ENCODE measurements at regions of chr17 and their contacts with region 1.

Region 1: DNA sequence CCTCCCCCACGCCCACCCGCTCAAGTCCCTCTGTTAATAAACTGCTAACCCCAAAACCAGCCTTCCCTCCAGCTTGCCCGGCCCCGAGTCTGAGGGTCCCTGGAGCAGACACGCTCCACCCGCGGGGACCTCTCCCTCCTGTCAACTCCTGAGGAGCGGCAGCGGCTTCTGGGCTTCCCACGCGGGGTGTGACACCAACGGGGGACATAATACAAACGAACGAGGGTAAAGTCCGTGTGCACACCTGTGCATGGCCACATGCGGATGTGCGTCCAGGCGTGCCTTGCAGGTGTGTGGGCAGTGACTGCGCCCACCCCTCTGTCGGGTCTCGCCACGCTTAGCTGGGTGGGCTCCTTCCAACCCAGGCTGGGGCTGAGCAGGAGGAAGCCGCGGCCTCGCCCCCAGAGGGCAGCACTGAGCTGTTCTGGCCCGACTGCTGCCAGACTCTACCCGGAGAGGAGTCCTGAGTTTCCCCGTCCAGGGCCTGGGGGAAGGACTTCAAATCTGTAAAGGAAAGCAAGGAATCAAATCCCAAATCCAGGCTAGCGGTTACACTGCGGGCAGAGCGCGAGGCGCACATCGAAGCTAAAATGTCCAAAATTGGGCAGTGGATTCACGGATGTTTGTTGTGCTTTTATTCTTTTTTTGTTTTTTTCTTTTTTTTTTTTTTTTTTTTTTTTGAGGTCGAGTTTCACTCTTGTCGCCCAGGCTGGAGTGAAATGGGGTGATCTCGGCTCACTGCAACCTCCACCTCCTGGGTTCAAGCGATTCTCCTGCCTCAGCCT is 24.2 kb upstream of the KRT17 start:
- DNase-seq: peak; percentile 87
- ATAC-seq: peak; percentile 93 to 97

Region 2: DNA sequence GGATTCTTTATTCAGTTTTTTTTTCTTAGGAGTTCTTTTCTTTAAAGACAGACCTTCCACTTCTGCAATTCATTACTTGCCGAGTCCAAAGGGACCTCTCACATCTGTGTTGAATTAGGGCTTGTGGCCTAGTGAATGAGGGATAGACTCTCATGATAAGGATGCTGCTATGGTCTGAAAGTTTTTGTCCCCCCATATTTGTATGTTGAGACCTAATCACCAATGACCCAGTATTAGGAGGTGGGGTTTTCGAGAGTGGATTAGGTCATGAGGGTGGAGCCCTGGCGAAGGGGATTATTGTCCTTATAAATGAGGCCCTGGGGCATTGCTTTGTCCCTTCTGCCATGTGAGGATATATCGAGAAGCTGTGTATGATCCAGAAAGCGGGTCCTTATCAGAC is 791.1 kb before region 1 on chr17:
- intact Hi-C with region 1: loop called in 1 of 2 experiments (anchors 5 kb)
- DNase-seq: no peak
- ATAC-seq: peak in 1 of 2 donors; percentile 67

Region 3: GRCh38 chr17:40909351-40909750 is 739.3 kb before region 1 on chr17:
- intact Hi-C with region 1: loop called in 1 of 2 experiments (anchors 1 kb)
- DNase-seq: peak; percentile 72
- ATAC-seq: peak; percentile 87 to 97

Region 4: GRCh38 chr17:41705271-41705991 is 56.8 kb after region 1 on chr17:
- intact Hi-C with region 1: no loop called
- DNase-seq: no peak
- ATAC-seq: no peak

Measured in left cardiac atrium (tissue), 4 donors.